ENCODE measurements at regions of chr11 and their contacts with region 1.

Region 1: GRCh38 chr11:342328-342727 is 21.7 kb upstream of the IFITM3 start:
- DNase-seq: no peak
- H3K4me3 ChIP-seq: no peak overlapping the region
- H3K27ac ChIP-seq: peak overlapping the region; percentile 57
- H3K4me1 ChIP-seq: peaks cover 35% of the 10 kb centered on the region
- CTCF ChIP-seq: no peak

Region 2: GRCh38 chr11:299951-300735 is 42.2 kb before region 1 on chr11:
- CTCF ChIA-PET with region 1: no interaction called
- POLR2A ChIA-PET with region 1: no interaction called
- intact Hi-C with region 1: no loop called
- DNase-seq: no peak
- H3K4me3 ChIP-seq: no peak overlapping the region
- H3K27ac ChIP-seq: no peak overlapping the region
- H3K4me1 ChIP-seq: peaks cover 11% of the 10 kb centered on the region
- CTCF ChIP-seq: no peak; the same call in 1 of the 2 replicates

Region 3: DNA sequence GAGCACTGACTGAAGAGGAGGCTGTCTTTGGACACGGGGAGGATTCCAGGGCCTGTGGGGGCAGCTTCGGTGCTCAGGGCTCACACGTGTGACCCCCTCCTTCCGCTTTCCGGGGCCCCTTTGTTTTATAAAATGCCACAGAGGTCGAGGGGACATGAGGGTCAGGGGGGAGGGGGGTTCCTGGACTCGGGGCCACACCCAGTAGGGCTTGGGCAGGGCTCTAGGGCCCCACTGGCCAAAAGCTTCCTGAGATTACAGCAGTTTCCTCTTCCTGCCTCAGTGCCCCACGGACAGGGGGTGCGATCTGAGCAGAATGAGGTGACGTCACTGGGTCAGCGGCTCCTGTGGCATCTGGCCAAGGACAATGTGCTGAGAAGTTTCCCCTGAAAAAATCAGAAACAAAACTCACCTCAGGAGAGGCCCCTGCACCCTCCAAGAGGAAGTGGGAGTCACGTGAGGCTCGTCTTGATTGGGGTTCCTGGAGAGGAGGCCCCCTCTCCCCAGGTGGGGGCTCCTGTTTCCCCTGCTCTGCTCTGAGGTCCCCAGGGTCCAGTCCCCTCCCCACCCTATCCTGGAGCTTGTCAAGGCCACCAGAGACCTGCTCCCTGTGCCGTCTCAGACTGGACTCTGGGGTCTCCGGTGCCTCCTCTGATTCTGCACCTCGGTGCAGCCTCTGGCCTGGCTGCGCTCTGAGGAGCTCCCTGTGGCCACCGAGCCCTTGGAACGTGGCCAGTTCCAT is 15.3 kb before region 1 on chr11:
- CTCF ChIA-PET with region 1: interaction called, 4 read pairs
- POLR2A ChIA-PET with region 1: interaction called, 63 read pairs
- intact Hi-C with region 1: no loop called
- DNase-seq: peak; percentile 81
- H3K4me3 ChIP-seq: peak overlapping the region; percentile 44
- H3K27ac ChIP-seq: peak overlapping the region; percentile 75
- H3K4me1 ChIP-seq: peaks cover 61% of the 10 kb centered on the region
- CTCF ChIP-seq: no peak; the same call in 1 of the 2 replicates

Region 4: DNA sequence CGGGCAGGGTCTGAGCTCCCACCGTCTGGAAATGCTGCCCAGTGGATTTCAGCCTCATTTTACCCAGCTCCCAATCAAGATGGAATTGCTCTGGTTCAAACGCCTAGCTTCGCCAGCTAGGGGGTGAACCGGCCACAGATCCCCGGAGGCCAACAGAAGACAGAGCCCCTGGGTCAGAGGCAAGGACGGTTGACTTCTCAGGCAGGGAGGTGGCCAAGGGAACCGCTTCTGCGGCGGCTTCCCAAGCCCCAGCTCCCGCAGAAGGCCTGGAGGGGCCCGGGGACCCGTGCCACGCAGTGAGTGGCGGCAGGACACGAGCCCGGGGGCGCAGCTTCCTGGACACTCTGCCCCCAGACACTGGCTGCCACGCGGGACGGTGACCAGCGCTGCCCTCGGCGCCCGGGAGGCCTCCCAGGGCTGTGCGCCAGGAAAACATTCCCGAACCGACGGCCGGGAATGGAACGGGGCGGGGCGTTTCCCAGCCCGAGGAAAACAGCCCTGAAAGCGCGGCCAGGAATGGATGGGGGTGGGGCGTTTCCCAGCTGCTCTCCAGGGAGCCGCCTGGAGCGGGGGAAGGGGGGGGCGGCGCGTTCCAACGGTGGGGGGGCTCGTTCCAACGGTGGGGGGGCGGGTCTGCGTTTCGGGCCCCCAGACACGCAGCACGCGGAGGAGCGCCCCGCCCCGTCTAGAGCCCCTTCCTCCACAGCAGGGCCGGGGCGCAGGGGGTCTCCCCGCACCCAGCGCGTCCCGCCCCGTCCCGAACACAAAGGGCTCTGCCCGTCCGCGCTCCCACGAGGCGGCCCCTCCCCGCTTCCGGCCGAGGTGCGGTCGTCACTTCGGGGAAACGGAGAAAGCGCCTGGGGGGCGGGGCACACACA is 13.5 kb after region 1 on chr11:
- CTCF ChIA-PET with region 1: no interaction called
- POLR2A ChIA-PET with region 1: interaction called, 17 read pairs
- intact Hi-C with region 1: no loop called
- DNase-seq: peak; percentile 81
- H3K4me3 ChIP-seq: peak overlapping the region; percentile 55
- H3K27ac ChIP-seq: peak overlapping the region; percentile 73
- H3K4me1 ChIP-seq: peaks cover 41% of the 10 kb centered on the region
- CTCF ChIP-seq: no peak

Region 5: DNA sequence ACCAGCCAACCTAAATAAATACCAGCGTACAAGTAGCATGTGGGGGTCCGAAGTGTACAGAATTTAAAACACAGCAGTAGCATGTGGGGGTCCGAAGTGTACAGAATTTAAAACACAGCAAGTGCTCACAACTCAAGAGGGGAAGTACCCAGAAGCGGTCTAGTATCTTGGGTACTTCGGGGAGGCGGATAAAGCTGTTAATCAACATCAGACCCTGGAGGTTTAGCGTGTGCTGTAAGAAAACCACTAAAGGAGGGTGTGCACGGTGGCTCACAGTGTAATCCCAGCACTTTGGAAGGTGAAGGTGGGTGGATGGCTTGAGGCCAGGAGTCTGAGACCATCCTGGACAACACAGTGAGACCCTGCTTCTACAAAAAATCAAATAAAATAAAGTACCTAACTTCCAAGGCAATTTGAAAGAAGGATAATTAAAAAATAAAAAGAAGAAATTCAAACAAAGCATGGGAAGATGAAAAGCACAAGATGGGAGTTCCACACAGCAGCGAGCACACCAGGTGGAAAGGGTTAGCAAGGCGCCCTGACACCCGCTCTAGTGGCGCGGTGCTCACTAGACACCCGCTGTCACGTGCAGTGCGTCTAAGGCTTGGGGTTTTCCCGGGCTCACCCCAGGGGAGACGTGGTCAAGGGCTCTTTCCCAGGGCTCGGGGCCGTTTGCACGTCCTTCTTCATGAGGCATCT is 1179.2 kb after region 1 on chr11:
- CTCF ChIA-PET with region 1: no interaction called
- POLR2A ChIA-PET with region 1: no interaction called
- intact Hi-C with region 1: loop called (anchors 10 kb)
- DNase-seq: peak; percentile 71
- H3K4me3 ChIP-seq: peak overlapping the region; percentile 52
- H3K27ac ChIP-seq: peak overlapping the region; percentile 88
- H3K4me1 ChIP-seq: peaks cover 53% of the 10 kb centered on the region
- CTCF ChIP-seq: 0 out of 2 replicates have a peak, but pooled peaks have one; percentile 9